CD8-positive, alpha-beta T cell (primary cell): ENCODE measurements at regions of chr10 and their contacts with region 1.

Region 1: GRCh38 chr10:32932225-32932729 is 25.8 kb downstream of the ITGB1 start:
- DNase-seq: no peak
- ATAC-seq: no peak
- H3K4me3 ChIP-seq: no peak overlapping the region
- H3K4me3 Mint-ChIP-seq: no peak overlapping the region
- H3K27ac ChIP-seq: no peak overlapping the region
- H3K27ac Mint-ChIP-seq: no peak overlapping the region
- H3K4me1 ChIP-seq: no peaks in the 10 kb centered on the region
- H3K4me1 Mint-ChIP-seq: peaks cover 23% of the 10 kb centered on the region
- H3K27me3 ChIP-seq: no peaks in the 10 kb centered on the region
- H3K27me3 Mint-ChIP-seq: no peaks in the 10 kb centered on the region
- CTCF ChIP-seq: no peak

Region 2: GRCh38 chr10:32980558-32981468 is 48.5 kb after region 1 on chr10:
- CTCF ChIA-PET with region 1: no interaction called
- POLR2A ChIA-PET with region 1: no interaction called
- intact Hi-C with region 1: loop called in 1 of 2 experiments (anchors 2 kb)
- DNase-seq: peak; percentile 61 to 91 (median 85)
- ATAC-seq: peak; percentile 90
- H3K4me3 ChIP-seq: peak overlapping the region; percentile 52 to 66
- H3K4me3 Mint-ChIP-seq: peak overlapping the region; percentile 96
- H3K27ac ChIP-seq: peak overlapping the region; percentile 68 to 94
- H3K27ac Mint-ChIP-seq: peak overlapping the region; percentile 97
- H3K4me1 ChIP-seq: peaks cover 25% of the 10 kb centered on the region
- H3K4me1 Mint-ChIP-seq: peaks cover 34% of the 10 kb centered on the region
- H3K27me3 ChIP-seq: no peaks in the 10 kb centered on the region
- H3K27me3 Mint-ChIP-seq: no peaks in the 10 kb centered on the region
- CTCF ChIP-seq: no peak

Region 3: GRCh38 chr10:33095867-33096815 is 163.9 kb after region 1 on chr10:
- CTCF ChIA-PET with region 1: no interaction called
- POLR2A ChIA-PET with region 1: no interaction called
- intact Hi-C with region 1: no loop called
- DNase-seq: no peak
- ATAC-seq: no peak
- H3K4me3 ChIP-seq: no peak overlapping the region
- H3K4me3 Mint-ChIP-seq: no peak overlapping the region
- H3K27ac ChIP-seq: no peak overlapping the region
- H3K27ac Mint-ChIP-seq: no peak overlapping the region
- H3K4me1 ChIP-seq: peaks cover 12% of the 10 kb centered on the region
- H3K4me1 Mint-ChIP-seq: peaks cover 21% of the 10 kb centered on the region
- H3K27me3 ChIP-seq: no peaks in the 10 kb centered on the region
- H3K27me3 Mint-ChIP-seq: no peaks in the 10 kb centered on the region
- CTCF ChIP-seq: no peak